ENCODE measurements at regions of chr7 and their contacts with region 1.

Region 1: GRCh38 chr7:2157468-2158279 is 75.1 kb downstream of the MAD1L1 start:
- DNase-seq: peak; percentile 60 to 71
- ATAC-seq: peak; percentile 77
- H3K4me3 ChIP-seq: no peak overlapping the region
- H3K27ac ChIP-seq: peak overlapping the region in 1 of 2 donors; percentile 69
- H3K4me1 ChIP-seq: peaks cover 0 to 2% of the 10 kb centered on the region in 2 donors
- H3K27me3 ChIP-seq: no peaks in the 10 kb centered on the region

Region 2: GRCh38 chr7:2104107-2104710 is 53.5 kb before region 1 on chr7:
- intact Hi-C with region 1: loop called in 1 of 2 experiments (anchors 5 kb)
- DNase-seq: peak; percentile 86 to 95
- ATAC-seq: peak; percentile 86
- H3K4me3 ChIP-seq: no peak overlapping the region
- H3K27ac ChIP-seq: no peak overlapping the region
- H3K4me1 ChIP-seq: no peaks in the 10 kb centered on the region
- H3K27me3 ChIP-seq: no peaks in the 10 kb centered on the region

Measured in aorta (tissue), 5 donors.